Activated CD4-positive, alpha-beta memory T cell treated with anti-CD3 and anti-CD28 coated beads for 36 hours (primary cell): ENCODE measurements at regions of chr19 and their contacts with region 1.

Region 1: DNA sequence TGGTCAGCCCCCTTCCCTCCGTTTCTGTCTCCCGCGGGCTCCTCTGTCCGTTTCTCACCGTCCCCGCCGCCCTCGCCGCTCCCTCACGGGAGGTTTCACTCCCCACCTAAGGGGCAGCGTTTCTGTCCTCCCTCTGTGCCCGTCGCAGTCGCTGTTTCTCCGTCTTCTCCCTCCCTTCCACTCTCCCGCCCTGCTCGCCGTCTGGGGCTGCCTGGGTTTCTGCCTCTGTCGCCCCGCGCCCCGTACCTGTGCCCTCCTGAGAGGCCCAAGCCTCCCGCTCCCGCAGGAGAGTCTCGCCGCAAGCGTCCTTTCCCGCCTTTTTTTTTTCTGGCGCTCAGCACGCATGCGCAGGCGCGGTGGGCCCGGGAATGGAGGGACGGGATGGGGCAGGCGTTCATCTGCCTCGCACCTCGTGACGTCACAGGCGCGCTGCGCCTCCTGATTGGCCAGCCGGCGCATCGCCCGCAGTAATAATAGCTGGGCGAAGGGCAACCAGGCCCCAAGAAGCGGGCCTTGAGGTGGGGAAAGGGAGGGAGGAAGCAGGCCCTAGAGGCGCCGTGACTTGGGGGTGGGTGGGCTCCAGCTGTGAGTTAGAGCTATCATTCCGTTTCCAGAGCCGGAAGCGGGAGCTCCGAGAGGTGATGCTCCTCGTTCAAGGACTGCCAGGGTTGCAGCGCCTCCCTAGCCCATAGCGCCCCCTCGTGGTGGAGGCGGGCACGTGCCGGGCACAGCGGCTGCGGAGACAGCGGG is 15.4 kb downstream of the SSC5D start:
- DNase-seq: peak; percentile 94
- H3K4me3 Mint-ChIP-seq: peak overlapping the region; percentile 69
- H3K27ac Mint-ChIP-seq: peak overlapping the region; percentile 78
- H3K4me1 Mint-ChIP-seq: peaks cover 18% of the 10 kb centered on the region
- H3K27me3 Mint-ChIP-seq: peaks cover 5% of the 10 kb centered on the region

Region 2: DNA sequence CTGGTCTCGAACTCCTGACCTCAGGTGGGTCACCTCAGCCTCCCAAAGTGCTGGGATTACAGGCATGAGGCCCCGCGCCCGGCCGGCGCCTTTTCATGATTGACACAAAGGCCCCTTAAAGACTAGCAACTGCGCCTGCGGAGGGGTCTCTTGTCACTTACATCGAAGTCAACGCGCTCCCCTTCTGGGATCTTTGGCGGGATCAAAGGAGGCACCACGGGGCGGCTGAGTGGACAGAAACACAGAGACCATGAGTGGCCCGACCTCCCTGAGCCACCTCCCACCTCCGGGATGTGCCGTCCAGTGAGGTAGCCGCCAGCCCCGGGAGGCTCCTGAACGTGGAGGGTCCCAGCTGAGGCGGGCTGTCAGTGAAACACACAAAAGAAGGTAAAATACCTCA is 362.0 kb before region 1 on chr19:
- CTCF ChIA-PET with region 1: interaction called, 70 read pairs
- POLR2A ChIA-PET with region 1: no interaction called
- intact Hi-C with region 1: loop called (anchors 5 kb)
- DNase-seq: no peak
- H3K4me3 Mint-ChIP-seq: no peak overlapping the region
- H3K27ac Mint-ChIP-seq: no peak overlapping the region
- H3K4me1 Mint-ChIP-seq: peaks cover 3% of the 10 kb centered on the region
- H3K27me3 Mint-ChIP-seq: peaks cover 45% of the 10 kb centered on the region

Region 3: GRCh38 chr19:55385740-55386529 is 117.7 kb before region 1 on chr19 and contains the start of gene RPL28:
- CTCF ChIA-PET with region 1: interaction called, 12 read pairs
- POLR2A ChIA-PET with region 1: no interaction called
- intact Hi-C with region 1: no loop called
- DNase-seq: peak; percentile 99
- H3K4me3 Mint-ChIP-seq: peak within 1 kb of the TSS; percentile 96
- H3K27ac Mint-ChIP-seq: peak within 1 kb of the TSS; percentile 92
- H3K4me1 Mint-ChIP-seq: peaks cover 59% of the 10 kb centered on the region
- H3K27me3 Mint-ChIP-seq: no peaks in the 10 kb centered on the region
- total RNA-seq, gene RPL28: 2,630 to 2,642 TPM

Region 4: GRCh38 chr19:55461259-55461973 is 42.3 kb before region 1 on chr19 and contains the start of gene ISOC2:
- CTCF ChIA-PET with region 1: interaction called, 93 read pairs
- POLR2A ChIA-PET with region 1: interaction called, 4 read pairs
- intact Hi-C with region 1: no loop called
- DNase-seq: peak; percentile 100
- H3K4me3 Mint-ChIP-seq: peak within 1 kb of the TSS; percentile 91
- H3K27ac Mint-ChIP-seq: peak within 1 kb of the TSS; percentile 84
- H3K4me1 Mint-ChIP-seq: peaks cover 21% of the 10 kb centered on the region
- H3K27me3 Mint-ChIP-seq: peaks cover 2% of the 10 kb centered on the region
- total RNA-seq, gene ISOC2: 24.6 to 24.7 TPM

Region 5: GRCh38 chr19:55476100-55476775 is 27.4 kb before region 1 on chr19 and contains the start of gene ZNF628:
- CTCF ChIA-PET with region 1: interaction called, 21 read pairs
- POLR2A ChIA-PET with region 1: interaction called, 6 read pairs
- intact Hi-C with region 1: no loop called
- DNase-seq: peak; percentile 99
- H3K4me3 Mint-ChIP-seq: peak within 1 kb of the TSS; percentile 88
- H3K27ac Mint-ChIP-seq: peak within 1 kb of the TSS; percentile 91
- H3K4me1 Mint-ChIP-seq: peaks cover 19% of the 10 kb centered on the region
- H3K27me3 Mint-ChIP-seq: no peaks in the 10 kb centered on the region
- total RNA-seq, gene ZNF628: 5.8 to 6.9 TPM

Region 6: GRCh38 chr19:55516878-55517620 is 13.4 kb after region 1 on chr19:
- CTCF ChIA-PET with region 1: interaction called, 16 read pairs
- POLR2A ChIA-PET with region 1: no interaction called
- intact Hi-C with region 1: no loop called
- DNase-seq: peak; percentile 93
- H3K4me3 Mint-ChIP-seq: peak overlapping the region; percentile 64
- H3K27ac Mint-ChIP-seq: no peak overlapping the region
- H3K4me1 Mint-ChIP-seq: peaks cover 3% of the 10 kb centered on the region
- H3K27me3 Mint-ChIP-seq: peaks cover 11% of the 10 kb centered on the region

Region 7: DNA sequence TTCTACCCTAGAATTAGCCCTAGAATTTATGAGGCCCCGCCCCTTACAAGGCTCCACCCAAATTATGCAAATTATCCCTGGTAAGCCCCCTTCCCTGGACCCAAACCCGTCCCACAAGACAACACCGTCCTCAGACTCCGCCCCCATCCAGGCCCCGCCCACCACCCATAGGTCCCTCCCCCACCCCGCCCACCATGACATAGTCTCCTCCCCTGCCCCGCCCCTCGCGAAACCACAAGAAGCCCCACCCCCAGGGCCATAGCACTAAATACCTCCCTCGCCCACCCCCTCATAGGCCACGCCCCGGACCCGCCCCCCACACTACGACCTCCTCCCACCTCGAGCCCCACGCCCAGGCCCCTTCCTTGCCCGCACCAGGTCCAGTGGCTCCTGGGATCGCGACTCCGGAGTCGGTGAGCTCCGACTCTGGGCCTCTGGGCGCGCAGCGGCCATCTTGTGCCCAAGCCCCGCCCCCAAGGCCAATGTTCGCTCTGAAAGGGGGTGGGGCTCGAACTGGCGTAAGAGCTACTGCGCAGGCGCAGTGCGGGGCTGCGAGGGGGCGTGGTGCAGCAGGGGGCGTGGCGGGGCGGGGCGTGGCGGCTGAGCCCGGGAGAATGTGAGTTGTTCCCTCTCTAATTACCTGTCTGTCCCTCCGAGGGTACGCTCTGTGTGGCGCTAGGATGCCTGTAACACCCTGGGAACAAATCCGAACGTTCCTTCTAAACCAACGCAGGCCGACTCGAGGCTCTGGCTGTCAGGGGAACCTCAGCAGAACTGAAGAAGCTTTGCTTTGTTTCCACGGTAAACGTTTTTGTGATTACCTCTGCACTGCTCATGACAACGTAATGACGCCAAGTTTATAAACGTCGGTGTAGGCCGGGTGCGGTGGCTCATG is 120.7 kb after region 1 on chr19 and contains the start of gene ZNF784:
- CTCF ChIA-PET with region 1: interaction called, 11 read pairs
- POLR2A ChIA-PET with region 1: no interaction called
- intact Hi-C with region 1: no loop called
- DNase-seq: peak; percentile 94
- H3K4me3 Mint-ChIP-seq: peak within 1 kb of the TSS; percentile 83
- H3K27ac Mint-ChIP-seq: peak within 1 kb of the TSS; percentile 94
- H3K4me1 Mint-ChIP-seq: peaks cover 46% of the 10 kb centered on the region
- H3K27me3 Mint-ChIP-seq: no peaks in the 10 kb centered on the region
- total RNA-seq, gene ZNF784: 3.9 to 4.4 TPM

Region 8: DNA sequence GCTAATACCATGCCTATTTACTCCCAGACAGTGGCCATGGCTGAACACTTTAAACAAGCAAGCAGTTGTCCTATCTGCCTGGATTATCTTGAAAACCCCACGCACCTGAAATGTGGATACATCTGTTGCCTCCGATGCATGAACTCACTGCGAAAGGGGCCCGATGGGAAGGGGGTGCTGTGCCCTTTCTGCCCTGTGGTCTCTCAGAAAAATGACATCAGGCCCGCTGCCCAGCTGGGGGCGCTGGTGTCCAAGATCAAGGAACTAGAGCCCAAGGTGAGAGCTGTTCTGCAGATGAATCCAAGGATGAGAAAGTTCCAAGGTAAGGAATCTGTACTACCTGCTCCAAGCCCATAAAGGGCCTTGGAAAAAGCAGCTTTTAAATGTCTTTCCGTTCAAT is 273.9 kb after region 1 on chr19:
- CTCF ChIA-PET with region 1: no interaction called
- POLR2A ChIA-PET with region 1: no interaction called
- intact Hi-C with region 1: no loop called
- DNase-seq: peak; percentile 17
- H3K4me3 Mint-ChIP-seq: no peak overlapping the region
- H3K27ac Mint-ChIP-seq: no peak overlapping the region
- H3K4me1 Mint-ChIP-seq: no peaks in the 10 kb centered on the region
- H3K27me3 Mint-ChIP-seq: peaks cover 29% of the 10 kb centered on the region